ENCODE measurements at regions of chr16 and their contacts with region 1.

Region 1: DNA sequence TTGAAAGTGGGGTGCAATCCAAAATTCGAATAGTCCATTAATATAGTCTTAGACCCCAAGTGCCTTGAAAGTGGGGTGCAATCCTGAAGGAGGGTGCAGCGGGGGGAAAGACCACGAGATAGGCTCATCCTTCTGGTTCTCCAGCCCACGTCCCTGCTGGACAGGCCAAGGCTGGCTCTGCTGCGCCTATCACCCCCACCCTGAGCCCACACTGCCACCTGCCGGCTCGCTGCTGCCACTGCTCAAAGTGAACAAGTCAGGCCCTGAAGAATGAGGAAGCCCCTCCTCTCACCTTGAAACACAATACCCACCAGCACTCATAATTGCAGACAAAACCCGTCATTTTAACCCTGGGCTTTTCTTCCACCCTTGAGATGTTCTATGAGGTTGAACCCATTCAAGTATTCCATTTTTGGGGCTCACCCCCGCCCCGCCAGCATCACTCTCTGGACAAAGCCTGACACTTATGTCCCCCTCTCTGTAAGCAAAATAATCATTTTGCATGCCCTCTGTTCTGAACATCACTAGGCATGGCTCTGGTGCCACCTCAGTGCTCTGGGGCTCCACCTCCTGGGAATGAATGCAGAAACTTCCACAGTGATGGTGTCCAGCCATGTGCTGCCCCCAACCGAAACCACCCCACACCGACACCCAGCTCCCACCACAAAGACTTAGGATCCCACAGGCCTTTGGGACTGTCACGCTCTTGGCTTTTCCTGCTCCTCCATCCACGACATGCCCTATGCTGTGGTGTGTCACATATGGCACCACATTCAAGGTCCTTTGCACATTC is 56.8 kb downstream of the BEAN1 start:
- DNase-seq: peak; percentile 69 to 79 (median 77)
- H3K4me3 ChIP-seq: no peak overlapping the region
- H3K4me3 Mint-ChIP-seq: no peak overlapping the region
- H3K27ac ChIP-seq: no peak overlapping the region
- H3K27ac Mint-ChIP-seq: peak overlapping the region in 3 of 7 donors; percentile 33 to 57 (median 54)
- H3K4me1 ChIP-seq: peaks cover 58 to 69% of the 10 kb centered on the region in 2 donors
- H3K4me1 Mint-ChIP-seq: peaks cover 63% of the 10 kb centered on the region
- H3K27me3 ChIP-seq: no peaks in the 10 kb centered on the region
- H3K27me3 Mint-ChIP-seq: peaks cover 2 to 4% (median 3%) of the 10 kb centered on the region in 3 donors
- CTCF ChIP-seq: peak; percentile 94

Region 2: GRCh38 chr16:66516808-66517585 is 33.1 kb after region 1 on chr16:
- intact Hi-C with region 1: loop called (anchors 2 to 5 kb)
- DNase-seq: peak; percentile 99 to 100 (median 99)
- H3K4me3 ChIP-seq: peak overlapping the region; percentile 24 to 68 (median 41)
- H3K4me3 Mint-ChIP-seq: peak overlapping the region; percentile 81 to 93
- H3K27ac ChIP-seq: peak overlapping the region; percentile 99
- H3K27ac Mint-ChIP-seq: peak overlapping the region; percentile 99 to 100 (median 100)
- H3K4me1 ChIP-seq: peaks cover 88 to 91% of the 10 kb centered on the region in 2 donors
- H3K4me1 Mint-ChIP-seq: peaks cover 92% of the 10 kb centered on the region
- H3K27me3 ChIP-seq: no peaks in the 10 kb centered on the region
- H3K27me3 Mint-ChIP-seq: peaks cover 0 to 2% (median 0%) of the 10 kb centered on the region in 3 donors
- CTCF ChIP-seq: no peak

Region 3: DNA sequence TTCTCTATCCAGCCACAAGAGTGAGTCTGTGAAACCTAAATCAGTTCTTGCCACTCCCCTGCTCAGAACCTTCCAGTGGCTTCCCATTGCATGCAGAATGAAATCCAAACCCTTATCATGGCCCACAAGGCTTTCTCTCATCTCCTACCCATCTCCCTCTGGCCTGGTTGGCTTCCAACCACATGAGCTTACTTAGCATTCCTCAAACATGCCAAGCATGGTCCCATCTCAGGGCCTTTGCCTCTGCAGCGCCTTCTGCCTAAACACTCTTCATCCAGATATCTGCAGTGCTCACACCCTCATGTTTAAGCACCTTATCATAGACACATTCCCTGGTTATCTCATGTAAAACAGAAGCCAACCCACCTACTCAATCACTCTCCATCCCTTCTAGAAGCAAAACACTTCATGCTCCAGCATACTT is 50.5 kb after region 1 on chr16:
- intact Hi-C with region 1: no loop called
- DNase-seq: no peak
- H3K4me3 ChIP-seq: no peak overlapping the region
- H3K4me3 Mint-ChIP-seq: no peak overlapping the region
- H3K27ac ChIP-seq: no peak overlapping the region
- H3K27ac Mint-ChIP-seq: peak overlapping the region in 2 of 7 donors; percentile 50 to 75
- H3K4me1 ChIP-seq: no peaks in the 10 kb centered on the region
- H3K4me1 Mint-ChIP-seq: peaks cover 7% of the 10 kb centered on the region
- H3K27me3 ChIP-seq: no peaks in the 10 kb centered on the region
- H3K27me3 Mint-ChIP-seq: peaks cover 0 to 3% (median 0%) of the 10 kb centered on the region in 3 donors
- CTCF ChIP-seq: no peak

Region 4: GRCh38 chr16:66588981-66589713 is 105.3 kb after region 1 on chr16:
- intact Hi-C with region 1: loop called (anchors 2 to 5 kb)
- DNase-seq: peak; percentile 68 to 83 (median 77)
- H3K4me3 ChIP-seq: no peak overlapping the region
- H3K4me3 Mint-ChIP-seq: peak overlapping the region in 1 of 2 donors; percentile 61
- H3K27ac ChIP-seq: peak overlapping the region in 1 of 2 donors; percentile 40
- H3K27ac Mint-ChIP-seq: peak overlapping the region in 3 of 7 donors; percentile 44 to 64 (median 46)
- H3K4me1 ChIP-seq: peaks cover 67 to 73% of the 10 kb centered on the region in 2 donors
- H3K4me1 Mint-ChIP-seq: peaks cover 68% of the 10 kb centered on the region
- H3K27me3 ChIP-seq: no peaks in the 10 kb centered on the region
- H3K27me3 Mint-ChIP-seq: peaks cover 0 to 6% (median 3%) of the 10 kb centered on the region in 3 donors
- CTCF ChIP-seq: peak; percentile 97